ENCODE measurements at regions of chr5 and their contacts with region 1.

Region 1: GRCh38 chr5:11075035-11075805 is 314.2 kb upstream of the DAP start:
- DNase-seq: peak in 1 of 2 experiments; percentile 52
- H3K4me3 ChIP-seq: no peak overlapping the region
- H3K27ac ChIP-seq: no peak overlapping the region
- H3K4me1 ChIP-seq: no peaks in the 10 kb centered on the region; a peak in 1 of 7 replicates
- H3K27me3 ChIP-seq: no peaks in the 10 kb centered on the region
- CTCF ChIP-seq: peak; percentile 70 to 77 (median 76)
- EP300 ChIP-seq: no peak
- POLR2A ChIP-seq: no peak
- RAD21 ChIP-seq: peak; percentile 69 to 78

Region 2: GRCh38 chr5:11062397-11062796 is 12.8 kb before region 1 on chr5:
- CTCF ChIA-PET with region 1: interaction called, 10 read pairs
- POLR2A ChIA-PET with region 1: no interaction called
- DNase-seq: peak in 1 of 2 experiments; percentile 51
- H3K4me3 ChIP-seq: no peak overlapping the region
- H3K27ac ChIP-seq: no peak overlapping the region
- H3K4me1 ChIP-seq: no peaks in the 10 kb centered on the region; a peak in 1 of 7 replicates
- H3K27me3 ChIP-seq: no peaks in the 10 kb centered on the region
- CTCF ChIP-seq: no peak
- EP300 ChIP-seq: no peak
- POLR2A ChIP-seq: no peak
- RAD21 ChIP-seq: peak in 1 of 2 experiments; percentile 9; a peak in 1 of 4 replicates

Region 3: DNA sequence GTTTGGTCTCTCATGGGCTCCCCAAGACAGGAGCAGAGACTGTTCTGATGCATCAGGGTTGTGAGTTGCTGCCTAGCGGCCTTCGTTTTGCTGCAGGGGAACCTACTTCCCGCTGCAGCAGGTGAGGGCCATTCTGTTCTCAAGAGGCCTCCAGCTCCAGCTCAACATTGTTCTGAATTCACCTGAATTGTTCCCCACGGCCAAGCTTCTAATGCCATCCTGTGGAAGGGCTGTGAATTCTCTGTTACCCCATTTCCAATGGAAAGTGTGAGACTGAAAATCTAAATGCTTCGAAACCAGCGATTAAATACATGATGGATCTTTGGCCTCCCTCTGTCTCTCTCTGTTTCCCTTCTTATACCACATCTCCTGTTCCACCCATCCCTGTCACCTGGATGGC is 34.9 kb after region 1 on chr5:
- CTCF ChIA-PET with region 1: interaction called, 10 read pairs
- POLR2A ChIA-PET with region 1: no interaction called
- DNase-seq: no peak
- H3K4me3 ChIP-seq: no peak overlapping the region
- H3K27ac ChIP-seq: no peak overlapping the region
- H3K4me1 ChIP-seq: 0 out of 7 replicates have a peak, but pooled peaks cover 0 to 2% (median 0%) of the 10 kb centered on the region in 4 experiments
- H3K27me3 ChIP-seq: no peaks in the 10 kb centered on the region
- CTCF ChIP-seq: peak in 2 of 3 experiments; percentile 21 to 27; a peak in 1 of 4 replicates
- EP300 ChIP-seq: no peak
- POLR2A ChIP-seq: no peak
- RAD21 ChIP-seq: peak; percentile 55 to 65

Measured in H1 (cell line).